Gastrocnemius medialis (tissue), 4 donors: ENCODE measurements at regions of chr22 and their contacts with region 1.

Region 1: GRCh38 chr22:49936018-49936952 is 17.9 kb downstream of the CRELD2 start:
- DNase-seq: peak; percentile 87 to 95
- ATAC-seq: peak; percentile 47 to 53
- H3K4me3 ChIP-seq: peak overlapping the region; percentile 40 to 62 (median 47)
- H3K27ac ChIP-seq: peak overlapping the region; percentile 96 to 99 (median 96)
- H3K4me1 ChIP-seq: peaks cover 50 to 55% of the 10 kb centered on the region in 2 donors
- H3K27me3 ChIP-seq: no peaks in the 10 kb centered on the region
- CTCF ChIP-seq: no peak
- POLR2A ChIP-seq: peak; percentile 75 to 77

Region 2: DNA sequence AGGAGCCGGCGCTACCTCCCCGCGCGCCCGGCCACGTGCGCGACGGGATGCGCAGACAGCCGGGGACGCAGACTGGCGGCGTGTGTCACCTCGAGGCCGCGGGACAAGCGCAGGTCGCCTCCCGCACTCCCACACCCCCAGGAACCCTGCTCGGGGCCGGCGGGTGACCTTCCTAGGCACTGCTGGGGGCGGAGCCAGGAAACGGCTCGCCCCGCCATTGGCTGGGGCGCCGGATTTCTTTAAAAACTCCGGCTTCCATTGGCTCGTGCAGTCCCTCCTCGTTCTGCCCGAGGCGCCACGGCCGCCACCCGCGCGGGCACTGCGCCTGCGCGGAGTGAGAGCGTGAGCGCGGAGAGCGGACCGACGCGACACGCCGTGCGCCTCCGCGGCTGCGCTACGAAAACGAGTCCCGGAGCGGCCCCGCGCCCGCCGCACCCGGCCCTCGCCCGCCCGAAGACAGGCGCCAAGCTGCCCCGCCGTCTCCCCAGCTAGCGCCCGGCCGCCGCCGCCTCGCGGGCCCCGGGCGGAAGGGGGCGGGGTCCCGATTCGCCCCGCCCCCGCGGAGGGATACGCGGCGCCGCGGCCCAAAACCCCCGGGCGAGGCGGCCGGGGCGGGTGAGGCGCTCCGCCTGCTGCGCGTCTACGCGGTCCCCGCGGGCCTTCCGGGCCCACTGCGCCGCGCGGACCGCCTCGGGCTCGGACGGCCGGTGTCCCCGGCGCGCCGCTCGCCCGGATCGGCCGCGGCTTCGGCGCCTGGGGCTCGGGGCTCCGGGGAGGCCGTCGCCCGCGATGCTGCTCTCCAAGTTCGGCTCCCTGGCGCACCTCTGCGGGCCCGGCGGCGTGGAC is 24.1 kb after region 1 on chr22 and contains the start of gene PIM3:
- in situ Hi-C with region 1: no loop called
- intact Hi-C with region 1: loop called (anchors 1 kb)
- DNase-seq: peak; percentile 93 to 97
- ATAC-seq: peak; percentile 56 to 64
- H3K4me3 ChIP-seq: peak within 1 kb of the TSS; percentile 83 to 98 (median 88)
- H3K27ac ChIP-seq: peak within 1 kb of the TSS; percentile 90 to 99 (median 97)
- H3K4me1 ChIP-seq: peaks cover 35 to 43% of the 10 kb centered on the region in 2 donors
- H3K27me3 ChIP-seq: no peaks in the 10 kb centered on the region
- CTCF ChIP-seq: peak in 1 of 5 experiments; percentile 14
- POLR2A ChIP-seq: peak; percentile 94 to 96
- total RNA-seq, gene PIM3: 165 to 327 (median 188) TPM

Region 3: GRCh38 chr22:49970528-49971231 is 34.4 kb after region 1 on chr22:
- in situ Hi-C with region 1: no loop called
- intact Hi-C with region 1: loop called (anchors 2 kb)
- DNase-seq: peak; percentile 98 to 99
- ATAC-seq: peak; percentile 61 to 69
- H3K4me3 ChIP-seq: peak overlapping the region; percentile 61 to 80 (median 64)
- H3K27ac ChIP-seq: peak overlapping the region; percentile 90 to 99 (median 95)
- H3K4me1 ChIP-seq: peaks cover 41 to 44% of the 10 kb centered on the region in 2 donors
- H3K27me3 ChIP-seq: no peaks in the 10 kb centered on the region
- CTCF ChIP-seq: no peak
- POLR2A ChIP-seq: peak; percentile 94 to 96

Region 4: DNA sequence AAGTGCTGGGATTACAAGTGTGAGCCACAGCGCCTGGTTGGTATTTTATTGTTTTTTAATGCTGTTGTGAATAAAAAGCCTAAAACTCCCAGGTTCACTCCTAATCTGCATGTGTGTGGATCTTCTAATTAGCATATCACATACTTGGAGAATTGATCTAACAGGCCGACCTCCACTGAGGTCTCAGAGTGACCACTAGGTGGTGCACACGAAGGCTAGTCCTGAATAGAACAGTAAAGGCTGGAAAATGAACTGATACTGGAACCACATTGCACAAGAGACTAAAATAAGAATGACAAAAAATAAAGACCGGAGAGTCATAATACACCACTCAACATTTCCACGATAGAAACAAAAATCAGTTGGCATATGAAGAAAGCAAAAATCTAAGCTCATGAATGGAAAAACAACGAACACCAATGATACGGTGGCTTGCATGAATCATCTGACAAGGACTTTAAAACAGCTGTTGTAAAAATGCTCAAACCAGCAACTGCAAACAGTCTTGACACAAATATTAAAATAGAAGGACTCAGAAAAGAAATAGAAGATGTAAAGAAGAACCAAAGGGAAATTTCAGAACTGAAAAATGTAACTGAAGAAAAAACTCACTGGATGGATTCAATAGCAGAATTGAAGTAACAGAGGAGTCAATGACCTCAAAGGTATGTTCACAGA is 43.4 kb after region 1 on chr22:
- in situ Hi-C with region 1: loop called in 1 of 4 experiments (anchors 10 kb)
- intact Hi-C with region 1: no loop called
- DNase-seq: no peak
- ATAC-seq: peak in 1 of 2 donors; percentile 26
- H3K4me3 ChIP-seq: no peak overlapping the region
- H3K27ac ChIP-seq: no peak overlapping the region
- H3K4me1 ChIP-seq: peaks cover 0 to 4% of the 10 kb centered on the region in 2 donors
- H3K27me3 ChIP-seq: peaks cover 9 to 24% (median 22%) of the 10 kb centered on the region in 3 donors
- CTCF ChIP-seq: peak in 4 of 5 experiments; percentile 25 to 55 (median 49)
- POLR2A ChIP-seq: no peak

Region 5: GRCh38 chr22:50200461-50201190 is 264.3 kb after region 1 on chr22 and contains the start of gene SELENOO:
- in situ Hi-C with region 1: loop called in 1 of 4 experiments (anchors 10 kb)
- intact Hi-C with region 1: loop called (anchors 10 kb)
- DNase-seq: peak; percentile 87 to 90
- ATAC-seq: peak; percentile 90 to 92
- H3K4me3 ChIP-seq: peak within 1 kb of the TSS; percentile 60 to 91 (median 74)
- H3K27ac ChIP-seq: peak within 1 kb of the TSS; percentile 70 to 89 (median 82)
- H3K4me1 ChIP-seq: peaks cover 29 to 32% of the 10 kb centered on the region in 2 donors
- H3K27me3 ChIP-seq: no peaks in the 10 kb centered on the region
- CTCF ChIP-seq: no peak
- POLR2A ChIP-seq: peak; percentile 94 to 98
- total RNA-seq, gene SELENOO: 26.4 to 54.9 (median 34.0) TPM